ENCODE measurements at regions of chr7 and their contacts with region 1.

Region 1: GRCh38 chr7:33895025-33895804 is 10.1 kb upstream of the BMPER start:
- DNase-seq: peak; percentile 81 to 93 (median 88)
- H3K4me3 ChIP-seq: peak overlapping the region in 6 of 59 donors; percentile 11 to 36 (median 19)
- H3K27ac ChIP-seq: no peak overlapping the region
- H3K27me3 ChIP-seq: no peaks in the 10 kb centered on the region
- CTCF ChIP-seq: peak; percentile 46 to 96 (median 90)

Region 2: DNA sequence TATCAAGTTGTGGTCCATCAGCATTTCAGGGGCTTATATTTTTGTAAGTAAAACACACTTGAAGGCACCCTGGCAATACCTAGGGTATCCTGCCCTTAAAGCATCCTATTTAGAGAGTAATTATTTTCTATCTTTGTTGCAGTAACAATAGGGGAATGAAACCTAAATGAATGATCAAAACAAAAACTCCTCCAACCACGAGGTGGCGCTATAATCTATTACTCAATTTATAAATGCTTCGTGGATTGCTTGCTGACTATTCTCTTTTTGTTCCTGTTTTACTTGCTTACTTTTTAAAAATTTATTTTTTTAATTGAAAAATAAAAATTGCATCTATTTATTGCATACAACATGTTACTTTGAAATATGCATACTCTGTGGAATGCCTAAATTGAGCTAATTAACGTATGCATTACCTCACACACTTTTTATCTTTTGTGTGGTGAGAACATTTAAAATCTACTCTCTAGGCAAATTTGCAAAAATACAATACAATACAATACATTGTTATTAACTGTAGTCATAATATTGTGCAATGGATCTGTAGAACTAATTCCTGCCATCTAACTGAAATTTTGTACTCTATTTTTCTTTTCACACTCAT is 137.6 kb before region 1 on chr7:
- intact Hi-C with region 1: loop called (anchors 1 to 2 kb)
- DNase-seq: peak in 3 of 10 donors; percentile 20 to 65 (median 31)
- H3K4me3 ChIP-seq: no peak overlapping the region
- H3K27ac ChIP-seq: no peak overlapping the region
- H3K27me3 ChIP-seq: no peaks in the 10 kb centered on the region
- CTCF ChIP-seq: peak; percentile 65 to 95 (median 84)

Region 3: DNA sequence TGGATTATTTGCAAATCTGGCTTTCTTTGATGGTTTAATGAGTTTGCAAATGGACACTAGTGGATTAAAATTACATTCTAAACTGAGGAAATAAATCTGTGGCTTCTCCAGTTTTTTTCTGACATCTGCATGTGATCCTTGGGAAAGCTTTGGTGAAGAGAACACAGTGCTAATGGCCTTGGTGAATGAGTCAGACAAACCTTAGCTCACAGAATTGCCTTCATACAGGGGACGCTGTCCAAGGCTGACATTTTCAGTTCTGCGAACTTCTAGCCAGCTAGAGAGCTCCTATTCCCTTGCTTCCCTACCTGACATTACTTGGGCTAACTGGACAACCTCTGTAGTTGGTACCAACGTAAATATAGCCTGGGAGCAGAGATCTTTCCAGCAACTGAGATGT is 31.3 kb after region 1 on chr7:
- intact Hi-C with region 1: no loop called
- DNase-seq: no peak
- H3K4me3 ChIP-seq: no peak overlapping the region
- H3K27ac ChIP-seq: no peak overlapping the region
- H3K27me3 ChIP-seq: no peaks in the 10 kb centered on the region
- CTCF ChIP-seq: no peak